OCI-LY7 (cell line): ENCODE measurements at regions of chr6 and their contacts with region 1.

Region 1: GRCh38 chr6:27753668-27754407 is 158.4 kb downstream of the OR2B2 start:
- DNase-seq: peak; percentile 87
- H3K4me3 ChIP-seq: peak overlapping the region; percentile 77
- H3K27ac ChIP-seq: no peak overlapping the region
- H3K4me1 ChIP-seq: peaks cover 11% of the 10 kb centered on the region
- CTCF ChIP-seq: 0 out of 2 replicates have a peak, but pooled peaks have one; percentile 27

Region 2: GRCh38 chr6:27177485-27178406 is 576.1 kb before region 1 on chr6:
- CTCF ChIA-PET with region 1: no interaction called
- POLR2A ChIA-PET with region 1: interaction called, 3 read pairs
- intact Hi-C with region 1: loop called (anchors 1 kb)
- DNase-seq: peak; percentile 89
- H3K4me3 ChIP-seq: peak overlapping the region; percentile 95
- H3K27ac ChIP-seq: peak overlapping the region; percentile 81
- H3K4me1 ChIP-seq: peaks cover 8% of the 10 kb centered on the region
- CTCF ChIP-seq: peak; percentile 74

Region 3: GRCh38 chr6:27479319-27480182 is 274.3 kb before region 1 on chr6:
- CTCF ChIA-PET with region 1: no interaction called
- POLR2A ChIA-PET with region 1: no interaction called
- intact Hi-C with region 1: loop called (anchors 2 kb)
- DNase-seq: peak; percentile 85
- H3K4me3 ChIP-seq: peak overlapping the region; percentile 73
- H3K27ac ChIP-seq: peak overlapping the region; percentile 79
- H3K4me1 ChIP-seq: peaks cover 15% of the 10 kb centered on the region
- CTCF ChIP-seq: no peak

Region 4: GRCh38 chr6:27518881-27519795 is 234.7 kb before region 1 on chr6:
- CTCF ChIA-PET with region 1: interaction called, 5 read pairs
- POLR2A ChIA-PET with region 1: interaction called, 3 read pairs
- intact Hi-C with region 1: loop called (anchors 1 kb)
- DNase-seq: peak; percentile 73
- H3K4me3 ChIP-seq: peak overlapping the region; percentile 73
- H3K27ac ChIP-seq: peak overlapping the region; percentile 31
- H3K4me1 ChIP-seq: peaks cover 7% of the 10 kb centered on the region
- CTCF ChIP-seq: peak; percentile 88

Region 5: GRCh38 chr6:27617700-27618689 is 135.8 kb before region 1 on chr6:
- CTCF ChIA-PET with region 1: no interaction called
- POLR2A ChIA-PET with region 1: no interaction called
- intact Hi-C with region 1: no loop called
- DNase-seq: no peak
- H3K4me3 ChIP-seq: no peak overlapping the region
- H3K27ac ChIP-seq: no peak overlapping the region
- H3K4me1 ChIP-seq: peaks cover 6% of the 10 kb centered on the region
- CTCF ChIP-seq: no peak

Region 6: GRCh38 chr6:27694545-27694870 is 59.3 kb before region 1 on chr6:
- CTCF ChIA-PET with region 1: no interaction called
- POLR2A ChIA-PET with region 1: interaction called, 3 read pairs
- intact Hi-C with region 1: loop called (anchors 2 kb)
- DNase-seq: no peak
- H3K4me3 ChIP-seq: peak overlapping the region; percentile 83
- H3K27ac ChIP-seq: no peak overlapping the region
- H3K4me1 ChIP-seq: peaks cover 6% of the 10 kb centered on the region
- CTCF ChIP-seq: no peak; the same call in 1 of the 2 replicates

Region 7: DNA sequence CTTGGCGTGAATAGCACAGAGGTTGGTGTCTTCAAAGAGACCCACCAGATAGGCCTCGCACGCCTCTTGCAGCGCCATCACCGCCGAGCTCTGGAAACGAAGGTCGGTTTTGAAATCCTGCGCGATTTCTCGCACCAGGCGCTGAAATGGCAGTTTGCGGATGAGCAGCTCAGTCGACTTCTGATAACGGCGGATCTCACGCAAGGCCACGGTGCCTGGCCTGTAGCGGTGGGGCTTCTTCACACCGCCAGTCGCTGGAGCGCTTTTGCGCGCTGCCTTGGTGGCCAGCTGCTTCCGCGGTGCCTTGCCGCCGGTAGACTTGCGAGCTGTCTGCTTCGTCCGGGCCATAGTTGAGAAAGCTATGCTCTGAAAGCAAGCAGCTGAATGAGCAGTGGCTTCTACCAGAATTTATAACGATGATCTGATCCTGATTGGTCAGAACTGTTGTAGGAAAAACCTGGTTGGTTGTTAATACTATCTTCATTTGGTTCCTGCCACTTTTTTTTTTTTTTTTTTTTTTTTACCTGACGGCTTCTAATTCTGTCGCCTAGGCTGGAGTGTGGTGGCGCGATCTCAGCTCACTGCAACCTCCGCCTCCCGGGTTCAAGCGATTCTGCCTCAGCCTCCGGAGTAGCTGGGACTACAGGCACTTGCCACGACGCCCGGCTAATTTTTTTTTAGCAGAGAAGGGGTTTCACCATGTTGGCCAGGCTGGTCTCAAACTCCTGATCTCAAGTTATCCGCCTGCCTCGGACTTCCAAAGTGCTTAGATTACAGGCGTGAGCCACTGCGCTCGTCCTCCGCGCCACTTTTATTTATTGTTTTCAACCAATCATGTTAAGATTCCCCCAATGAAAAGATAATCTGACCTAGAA is 136.8 kb after region 1 on chr6:
- CTCF ChIA-PET with region 1: no interaction called
- POLR2A ChIA-PET with region 1: no interaction called
- intact Hi-C with region 1: no loop called
- DNase-seq: peak; percentile 94
- H3K4me3 ChIP-seq: peak overlapping the region; percentile 94
- H3K27ac ChIP-seq: peak overlapping the region; percentile 100
- H3K4me1 ChIP-seq: peaks cover 38% of the 10 kb centered on the region
- CTCF ChIP-seq: no peak

Region 8: DNA sequence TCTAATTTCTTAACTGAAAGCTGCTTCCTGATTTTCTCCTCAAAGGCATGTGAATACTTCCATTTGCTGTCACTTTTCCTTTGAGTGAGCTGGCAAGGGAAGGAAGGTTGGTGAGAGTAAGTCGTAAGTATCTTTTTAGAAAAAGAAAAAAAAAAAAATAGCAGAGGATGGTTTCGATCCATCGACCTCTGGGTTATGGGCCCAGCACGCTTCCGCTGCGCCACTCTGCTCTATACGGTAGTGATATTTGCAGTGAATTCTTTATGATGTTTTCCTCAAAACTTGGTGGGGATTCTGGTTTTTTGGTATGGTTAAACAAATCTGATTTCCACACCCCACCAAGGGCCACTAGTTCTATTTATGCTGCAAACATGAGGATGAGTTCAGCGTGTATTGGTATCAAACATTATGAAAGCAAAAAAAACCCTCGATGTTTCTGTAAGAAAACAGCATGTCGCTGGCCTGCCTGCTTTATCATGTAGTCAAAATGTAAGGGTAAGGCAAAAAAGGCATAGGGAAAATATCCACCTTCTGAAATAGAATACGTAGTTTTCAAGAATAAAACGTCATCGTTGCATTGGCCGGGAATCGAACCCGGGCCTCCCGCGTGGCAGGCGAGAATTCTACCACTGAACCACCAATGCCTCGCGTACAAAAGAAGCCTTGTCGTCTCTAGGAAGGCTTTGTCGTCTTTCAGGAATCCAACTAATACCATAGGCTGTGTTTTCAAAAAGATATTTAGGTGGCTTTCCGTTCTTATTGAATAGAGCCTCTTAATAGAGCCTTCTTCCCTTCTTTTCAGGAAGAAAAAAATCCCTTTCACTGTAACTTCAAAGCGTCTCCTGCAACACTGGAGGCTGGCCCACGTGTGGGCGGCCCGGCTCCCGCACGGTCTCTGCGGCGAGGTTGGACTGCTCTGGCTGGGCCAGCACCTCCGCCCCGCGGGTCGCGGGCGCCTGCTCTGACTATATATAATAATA is 148.8 kb after region 1 on chr6:
- CTCF ChIA-PET with region 1: no interaction called
- POLR2A ChIA-PET with region 1: no interaction called
- intact Hi-C with region 1: loop called (anchors 1 kb)
- DNase-seq: peak; percentile 81
- H3K4me3 ChIP-seq: peak overlapping the region; percentile 73
- H3K27ac ChIP-seq: peak overlapping the region; percentile 78
- H3K4me1 ChIP-seq: peaks cover 12% of the 10 kb centered on the region
- CTCF ChIP-seq: no peak

Region 9: DNA sequence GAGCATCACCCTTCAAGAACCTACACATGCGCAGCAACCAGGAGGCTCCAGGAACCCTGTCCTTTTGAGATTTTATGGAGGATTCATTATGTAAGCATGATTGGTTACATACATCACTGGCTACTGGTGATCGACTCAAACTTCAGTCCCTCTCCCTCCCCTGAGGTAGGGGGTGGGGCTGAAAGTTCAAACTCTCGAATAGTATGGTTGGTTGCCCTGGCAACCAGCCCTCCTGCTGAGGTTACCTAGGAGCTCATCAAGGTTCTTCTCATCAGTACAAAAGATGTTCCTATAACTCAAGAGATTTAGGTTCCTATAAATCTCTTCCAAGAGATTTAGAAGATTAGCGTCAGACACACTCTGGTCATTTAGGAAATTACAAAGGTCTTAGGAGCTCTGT is 449.4 kb after region 1 on chr6:
- CTCF ChIA-PET with region 1: no interaction called
- POLR2A ChIA-PET with region 1: no interaction called
- intact Hi-C with region 1: no loop called
- DNase-seq: no peak
- H3K4me3 ChIP-seq: no peak overlapping the region
- H3K27ac ChIP-seq: no peak overlapping the region
- H3K4me1 ChIP-seq: peaks cover 9% of the 10 kb centered on the region
- CTCF ChIP-seq: no peak

Region 10: DNA sequence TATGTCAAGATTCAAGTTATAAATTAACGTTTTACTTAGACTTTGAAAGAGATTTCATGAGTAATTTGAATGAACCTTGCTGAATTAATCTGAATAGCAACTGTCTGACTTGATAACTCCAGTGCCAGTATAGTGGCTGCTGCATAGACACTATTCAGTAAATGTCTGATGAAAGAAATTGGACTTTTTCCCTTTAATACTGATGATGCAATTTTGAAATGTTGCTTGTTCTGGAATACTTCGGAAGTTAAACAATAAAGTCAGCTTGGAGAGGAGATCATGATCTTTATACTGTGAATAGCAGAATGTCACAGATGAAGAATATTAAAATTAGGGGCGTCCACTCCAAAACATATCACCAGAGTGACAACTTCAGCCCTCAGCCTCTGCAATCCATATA is 523.9 kb after region 1 on chr6:
- CTCF ChIA-PET with region 1: no interaction called
- POLR2A ChIA-PET with region 1: no interaction called
- intact Hi-C with region 1: no loop called
- DNase-seq: no peak
- H3K4me3 ChIP-seq: no peak overlapping the region
- H3K27ac ChIP-seq: no peak overlapping the region
- H3K4me1 ChIP-seq: peaks cover 7% of the 10 kb centered on the region
- CTCF ChIP-seq: no peak